ENCODE measurements at regions of chr15 and their contacts with region 1.

Region 1: GRCh38 chr15:57146506-57147201 is 228.2 kb downstream of the TCF12 start:
- DNase-seq: no peak

Region 2: GRCh38 chr15:57158589-57158988 is 11.9 kb after region 1 on chr15:
- intact Hi-C with region 1: no loop called
- DNase-seq: no peak

Region 3: DNA sequence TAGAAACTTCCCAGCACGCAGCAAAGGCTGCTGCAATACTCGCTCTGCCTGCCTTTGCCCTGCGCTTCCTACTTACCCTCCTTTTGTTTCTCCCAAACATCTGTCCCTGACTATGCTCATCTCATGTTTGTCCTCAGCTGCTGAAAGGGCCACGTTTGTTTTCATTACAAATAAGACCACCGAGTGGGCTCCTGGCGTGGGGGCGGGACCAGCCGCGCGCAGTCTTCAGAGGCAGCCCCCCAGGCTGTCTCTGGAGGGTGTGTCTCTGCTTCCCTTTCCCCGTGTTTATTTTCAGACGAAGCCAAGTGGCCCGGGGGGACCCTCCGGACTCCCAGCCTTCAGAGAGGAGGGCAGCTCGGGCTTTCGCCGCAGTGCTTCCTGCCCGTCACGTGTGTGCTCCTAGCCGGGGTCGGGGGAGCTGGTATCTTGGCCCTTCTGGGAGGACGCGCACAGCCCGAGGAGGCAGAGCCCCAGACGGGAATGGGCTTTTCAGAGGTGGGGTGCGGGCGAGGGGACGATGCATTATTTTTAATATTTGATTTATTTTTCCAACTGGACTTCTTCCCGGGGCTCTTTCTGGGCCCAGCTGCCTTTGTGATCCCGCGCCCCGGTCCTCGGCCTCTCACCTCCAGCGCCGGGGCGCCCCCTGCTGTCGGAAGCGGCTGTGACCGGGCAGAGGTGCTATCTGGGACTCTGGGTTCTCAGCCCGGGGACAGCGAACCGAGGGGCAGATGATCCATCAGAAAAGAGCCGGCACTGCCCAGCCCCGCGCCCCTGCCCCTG is 159.7 kb after region 1 on chr15:
- intact Hi-C with region 1: loop called (anchors 5 to 10 kb)
- DNase-seq: peak; percentile 95